Activated CD8-positive, alpha-beta T cell treated with anti-CD3 and anti-CD28 coated beads for 36 hours (primary cell): ENCODE measurements at regions of chr21 and their contacts with region 1.

Region 1: DNA sequence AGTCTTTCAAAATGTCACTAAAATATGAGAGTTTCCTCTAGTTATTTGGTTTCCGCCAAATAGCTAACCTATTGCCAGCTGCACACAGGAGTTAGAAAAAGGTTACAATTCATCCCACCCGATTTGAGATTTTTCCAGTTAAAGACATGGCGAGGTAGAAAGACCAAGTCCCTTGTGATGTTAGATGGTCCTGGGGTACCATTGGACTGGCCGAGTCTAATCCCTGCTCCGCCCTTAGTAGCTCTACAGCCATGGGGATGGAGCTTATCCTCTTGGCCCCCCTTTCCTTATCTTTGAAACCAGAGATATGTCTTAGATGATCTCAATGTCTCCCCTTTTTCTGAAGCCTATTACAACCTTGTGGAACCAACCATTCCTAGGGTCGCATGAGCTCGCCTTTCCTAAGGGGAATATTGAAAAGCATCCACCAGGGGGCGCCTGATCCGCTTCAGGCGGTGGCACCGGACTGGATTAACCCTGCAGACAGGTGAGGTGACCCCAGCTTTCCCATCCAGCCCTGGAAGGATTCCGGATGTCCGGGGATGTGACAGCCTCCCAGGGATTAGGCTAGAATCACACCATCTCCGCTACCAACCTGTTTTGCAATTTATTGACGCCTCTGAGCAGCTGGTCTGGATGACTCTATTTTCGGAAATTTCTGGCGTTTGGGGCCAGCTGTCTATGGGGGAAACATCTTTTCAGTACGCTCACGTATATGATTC is 68.3 kb upstream of the SIM2 start:
- DNase-seq: peak; percentile 77
- ATAC-seq: peak; percentile 37
- H3K4me3 Mint-ChIP-seq: no peak overlapping the region
- H3K27ac Mint-ChIP-seq: no peak overlapping the region
- H3K4me1 Mint-ChIP-seq: no peaks in the 10 kb centered on the region
- H3K27me3 Mint-ChIP-seq: peaks cover 3% of the 10 kb centered on the region
- CTCF ChIP-seq: peak; percentile 87

Region 2: GRCh38 chr21:36504067-36505058 is 126.3 kb before region 1 on chr21:
- CTCF ChIA-PET with region 1: interaction called, 20 read pairs
- POLR2A ChIA-PET with region 1: no interaction called
- intact Hi-C with region 1: no loop called
- DNase-seq: peak; percentile 52
- ATAC-seq: no peak
- H3K4me3 Mint-ChIP-seq: no peak overlapping the region
- H3K27ac Mint-ChIP-seq: no peak overlapping the region
- H3K4me1 Mint-ChIP-seq: no peaks in the 10 kb centered on the region
- H3K27me3 Mint-ChIP-seq: no peaks in the 10 kb centered on the region
- CTCF ChIP-seq: peak; percentile 96

Region 3: DNA sequence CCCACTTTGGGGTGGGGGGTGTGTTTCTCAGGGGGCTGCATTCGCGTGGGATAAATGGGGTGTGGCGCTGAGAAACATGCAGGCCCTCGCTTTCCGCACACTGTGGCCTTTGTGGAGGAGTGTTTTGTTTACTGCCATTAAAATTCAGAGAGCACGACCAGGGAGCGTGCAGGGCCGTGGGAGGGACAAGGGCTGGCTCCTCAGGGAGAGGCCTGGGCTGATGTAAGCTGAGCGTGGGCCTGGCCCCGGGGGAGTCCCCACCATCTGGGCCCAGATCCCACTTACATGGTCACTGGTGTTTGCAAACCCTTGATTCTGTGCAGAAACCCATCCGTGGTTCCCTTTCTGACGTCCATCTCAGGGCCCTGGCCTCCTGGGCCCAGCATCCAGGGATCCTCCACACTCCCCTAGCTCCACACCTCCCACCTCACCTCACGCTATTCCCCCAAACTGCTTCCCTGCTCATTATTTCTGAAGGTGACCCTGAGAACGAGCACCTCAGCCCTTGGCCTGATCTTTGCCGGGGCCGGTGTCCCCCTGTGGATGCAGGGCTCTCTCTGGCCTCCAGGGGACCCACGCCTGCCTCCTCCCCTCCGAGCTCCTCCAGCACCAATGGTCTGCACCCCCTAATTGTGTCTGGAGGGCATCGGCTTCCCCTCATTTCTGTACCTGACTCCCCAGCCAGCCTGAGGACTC is 24.2 kb before region 1 on chr21:
- CTCF ChIA-PET with region 1: interaction called, 11 read pairs
- POLR2A ChIA-PET with region 1: no interaction called
- intact Hi-C with region 1: no loop called
- DNase-seq: no peak
- ATAC-seq: no peak
- H3K4me3 Mint-ChIP-seq: no peak overlapping the region
- H3K27ac Mint-ChIP-seq: no peak overlapping the region
- H3K4me1 Mint-ChIP-seq: peaks cover 15% of the 10 kb centered on the region
- H3K27me3 Mint-ChIP-seq: no peaks in the 10 kb centered on the region
- CTCF ChIP-seq: no peak

Region 4: GRCh38 chr21:36671836-36672235 is 41.2 kb after region 1 on chr21:
- CTCF ChIA-PET with region 1: interaction called, 13 read pairs
- POLR2A ChIA-PET with region 1: no interaction called
- intact Hi-C with region 1: no loop called
- DNase-seq: no peak
- ATAC-seq: no peak
- H3K4me3 Mint-ChIP-seq: no peak overlapping the region
- H3K27ac Mint-ChIP-seq: no peak overlapping the region
- H3K4me1 Mint-ChIP-seq: no peaks in the 10 kb centered on the region
- H3K27me3 Mint-ChIP-seq: peaks cover 16% of the 10 kb centered on the region
- CTCF ChIP-seq: no peak

Region 5: GRCh38 chr21:36854391-36854790 is 223.7 kb after region 1 on chr21:
- CTCF ChIA-PET with region 1: interaction called, 20 read pairs
- POLR2A ChIA-PET with region 1: no interaction called
- intact Hi-C with region 1: no loop called
- DNase-seq: peak; percentile 57
- ATAC-seq: peak; percentile 70
- H3K4me3 Mint-ChIP-seq: no peak overlapping the region
- H3K27ac Mint-ChIP-seq: no peak overlapping the region
- H3K4me1 Mint-ChIP-seq: peaks cover 11% of the 10 kb centered on the region
- H3K27me3 Mint-ChIP-seq: no peaks in the 10 kb centered on the region
- CTCF ChIP-seq: peak; percentile 62

Region 6: GRCh38 chr21:37009740-37010341 is 379.2 kb after region 1 on chr21:
- CTCF ChIA-PET with region 1: interaction called, 10 read pairs
- POLR2A ChIA-PET with region 1: no interaction called
- intact Hi-C with region 1: no loop called
- DNase-seq: peak; percentile 81
- ATAC-seq: peak; percentile 92
- H3K4me3 Mint-ChIP-seq: peak overlapping the region; percentile 56
- H3K27ac Mint-ChIP-seq: no peak overlapping the region
- H3K4me1 Mint-ChIP-seq: peaks cover 9% of the 10 kb centered on the region
- H3K27me3 Mint-ChIP-seq: peaks cover 38% of the 10 kb centered on the region
- CTCF ChIP-seq: peak; percentile 88